Caco-2 (cell line): ENCODE measurements at regions of chr1 and their contacts with region 1.

Region 1: DNA sequence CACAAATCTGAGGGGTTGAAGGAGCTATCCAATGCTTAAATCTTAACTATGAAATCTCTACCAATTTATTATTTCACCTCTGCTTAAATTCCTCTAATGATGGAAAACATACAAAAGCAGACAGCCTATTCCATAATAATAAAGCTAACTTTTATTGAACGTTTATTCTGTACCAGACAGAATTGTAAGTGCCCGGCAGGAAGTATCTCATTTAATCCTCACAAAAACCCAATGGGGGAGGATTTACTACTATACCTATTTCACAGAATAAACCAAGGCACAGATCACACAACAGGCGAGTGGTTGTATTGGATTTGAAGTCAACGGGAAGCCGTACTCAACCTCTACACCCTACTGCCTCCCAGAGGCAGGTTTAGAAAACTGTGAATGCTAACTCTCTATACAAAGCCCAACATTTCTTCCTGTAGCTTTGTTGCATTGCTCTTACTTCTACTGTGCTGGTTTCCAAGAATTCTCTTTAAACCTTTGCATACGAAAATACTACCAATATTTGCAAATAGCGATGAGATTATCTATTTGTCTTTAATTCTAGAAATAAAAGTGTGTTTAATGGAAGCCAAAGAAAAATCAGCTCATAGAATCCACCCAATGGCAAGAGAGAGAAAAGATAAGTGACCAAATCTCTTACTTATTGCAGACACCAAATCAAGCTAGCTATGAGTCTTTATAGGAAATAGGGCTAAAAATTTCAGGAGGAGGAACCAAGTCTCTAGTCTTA is 33.5 kb upstream of the C1orf53 start:
- DNase-seq: peak; percentile 36 to 45
- H3K4me3 ChIP-seq: no peak overlapping the region
- H3K4me3 Mint-ChIP-seq: no peak overlapping the region
- H3K27ac Mint-ChIP-seq: no peak overlapping the region
- H3K4me1 ChIP-seq: no peaks in the 10 kb centered on the region
- H3K4me1 Mint-ChIP-seq: peaks cover 8% of the 10 kb centered on the region
- H3K27me3 ChIP-seq: no peaks in the 10 kb centered on the region
- H3K27me3 Mint-ChIP-seq: peaks cover 6% of the 10 kb centered on the region
- CTCF ChIP-seq: peak; percentile 44 to 55

Region 2: DNA sequence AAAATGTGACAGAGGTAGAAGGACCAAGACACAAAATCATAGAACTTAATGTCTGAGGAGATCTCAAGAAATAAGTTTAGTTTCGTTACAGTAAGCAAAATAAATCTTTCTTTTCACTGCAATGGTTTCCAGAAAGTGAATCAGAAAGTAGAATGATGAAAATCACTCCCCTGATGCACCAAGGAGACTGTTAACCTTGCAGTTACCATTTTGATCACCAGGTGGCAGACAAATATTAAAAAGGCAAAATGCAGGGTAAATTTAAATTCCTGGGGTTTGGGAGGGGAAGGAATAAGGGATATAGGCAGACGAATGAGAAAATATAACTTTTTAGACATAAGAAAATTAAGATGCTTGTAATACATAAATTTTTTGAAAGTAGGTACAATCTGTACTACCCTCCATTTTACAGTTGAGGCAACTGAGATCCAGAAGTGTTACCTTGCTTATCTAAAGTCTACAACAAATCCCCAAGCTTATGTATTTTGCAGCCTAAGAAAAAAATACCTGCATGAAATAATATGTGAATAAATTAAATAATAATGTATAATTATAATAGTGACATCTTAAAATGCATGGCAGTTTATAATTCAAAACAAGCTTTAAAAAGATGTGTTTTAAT is 347.7 kb before region 1 on chr1:
- CTCF ChIA-PET with region 1: no interaction called
- POLR2A ChIA-PET with region 1: no interaction called
- intact Hi-C with region 1: loop called (anchors 2 kb)
- DNase-seq: peak in 1 of 2 experiments; percentile 47
- H3K4me3 ChIP-seq: no peak overlapping the region
- H3K4me3 Mint-ChIP-seq: no peak overlapping the region
- H3K27ac Mint-ChIP-seq: no peak overlapping the region
- H3K4me1 ChIP-seq: no peaks in the 10 kb centered on the region
- H3K4me1 Mint-ChIP-seq: no peaks in the 10 kb centered on the region
- H3K27me3 ChIP-seq: no peaks in the 10 kb centered on the region
- H3K27me3 Mint-ChIP-seq: no peaks in the 10 kb centered on the region
- CTCF ChIP-seq: peak; percentile 64 to 70

Region 3: DNA sequence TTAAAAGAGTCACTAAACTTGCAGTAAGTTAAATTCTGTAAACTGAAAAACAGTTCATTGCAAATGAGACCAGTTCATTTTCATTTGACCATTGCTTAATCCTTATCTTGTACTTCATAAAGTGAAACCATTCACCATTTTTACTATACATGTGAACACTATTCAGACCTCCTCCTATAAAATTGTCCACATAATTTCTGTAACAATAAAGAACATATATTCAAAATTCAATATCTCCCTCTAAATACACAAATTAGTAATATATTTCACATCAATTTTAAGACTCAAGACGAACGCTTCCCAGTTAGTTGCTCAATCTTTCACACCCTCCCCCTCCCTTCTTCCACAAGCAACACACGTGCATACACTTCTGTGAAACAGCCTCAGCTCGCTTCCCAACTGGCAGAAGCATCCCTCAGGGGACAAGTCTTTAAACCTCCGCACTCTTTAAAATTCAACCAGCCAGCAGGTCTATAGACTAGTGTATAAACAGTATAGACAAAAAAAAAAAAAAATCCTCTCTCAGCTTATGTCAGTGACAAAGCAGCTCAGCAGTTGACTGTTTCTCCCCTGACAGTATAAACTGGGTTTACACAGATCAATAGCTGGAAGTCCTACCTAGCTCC is 193.2 kb before region 1 on chr1:
- CTCF ChIA-PET with region 1: no interaction called
- POLR2A ChIA-PET with region 1: no interaction called
- intact Hi-C with region 1: loop called (anchors 5 kb)
- DNase-seq: no peak
- H3K4me3 ChIP-seq: no peak overlapping the region
- H3K4me3 Mint-ChIP-seq: peak overlapping the region; percentile 47
- H3K27ac Mint-ChIP-seq: no peak overlapping the region
- H3K4me1 ChIP-seq: no peaks in the 10 kb centered on the region
- H3K4me1 Mint-ChIP-seq: no peaks in the 10 kb centered on the region
- H3K27me3 ChIP-seq: no peaks in the 10 kb centered on the region
- H3K27me3 Mint-ChIP-seq: no peaks in the 10 kb centered on the region
- CTCF ChIP-seq: no peak

Region 4: DNA sequence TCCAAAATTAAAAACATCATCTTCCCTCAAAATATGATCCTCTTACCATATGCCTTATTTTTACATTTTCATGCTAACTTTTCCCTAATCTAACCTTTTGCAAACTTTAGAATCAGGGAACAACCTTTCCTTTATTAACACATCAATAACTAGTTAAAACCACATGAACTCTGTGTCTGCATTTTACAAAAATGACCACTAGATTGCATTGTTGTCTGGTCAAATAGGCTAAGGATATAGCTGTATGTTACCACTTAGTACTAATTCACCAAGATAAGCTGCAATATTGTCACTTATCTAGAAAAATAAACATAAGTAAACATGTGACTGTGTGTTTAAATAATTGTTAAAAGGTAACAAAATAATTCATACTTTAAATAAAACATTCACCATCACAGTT is 176.0 kb before region 1 on chr1:
- CTCF ChIA-PET with region 1: interaction called, 4 read pairs
- POLR2A ChIA-PET with region 1: no interaction called
- intact Hi-C with region 1: loop called (anchors 1 kb)
- DNase-seq: no peak
- H3K4me3 ChIP-seq: no peak overlapping the region
- H3K4me3 Mint-ChIP-seq: no peak overlapping the region
- H3K27ac Mint-ChIP-seq: no peak overlapping the region
- H3K4me1 ChIP-seq: no peaks in the 10 kb centered on the region
- H3K4me1 Mint-ChIP-seq: no peaks in the 10 kb centered on the region
- H3K27me3 ChIP-seq: no peaks in the 10 kb centered on the region
- H3K27me3 Mint-ChIP-seq: no peaks in the 10 kb centered on the region
- CTCF ChIP-seq: peak in 1 of 2 experiments; percentile 24

Region 5: DNA sequence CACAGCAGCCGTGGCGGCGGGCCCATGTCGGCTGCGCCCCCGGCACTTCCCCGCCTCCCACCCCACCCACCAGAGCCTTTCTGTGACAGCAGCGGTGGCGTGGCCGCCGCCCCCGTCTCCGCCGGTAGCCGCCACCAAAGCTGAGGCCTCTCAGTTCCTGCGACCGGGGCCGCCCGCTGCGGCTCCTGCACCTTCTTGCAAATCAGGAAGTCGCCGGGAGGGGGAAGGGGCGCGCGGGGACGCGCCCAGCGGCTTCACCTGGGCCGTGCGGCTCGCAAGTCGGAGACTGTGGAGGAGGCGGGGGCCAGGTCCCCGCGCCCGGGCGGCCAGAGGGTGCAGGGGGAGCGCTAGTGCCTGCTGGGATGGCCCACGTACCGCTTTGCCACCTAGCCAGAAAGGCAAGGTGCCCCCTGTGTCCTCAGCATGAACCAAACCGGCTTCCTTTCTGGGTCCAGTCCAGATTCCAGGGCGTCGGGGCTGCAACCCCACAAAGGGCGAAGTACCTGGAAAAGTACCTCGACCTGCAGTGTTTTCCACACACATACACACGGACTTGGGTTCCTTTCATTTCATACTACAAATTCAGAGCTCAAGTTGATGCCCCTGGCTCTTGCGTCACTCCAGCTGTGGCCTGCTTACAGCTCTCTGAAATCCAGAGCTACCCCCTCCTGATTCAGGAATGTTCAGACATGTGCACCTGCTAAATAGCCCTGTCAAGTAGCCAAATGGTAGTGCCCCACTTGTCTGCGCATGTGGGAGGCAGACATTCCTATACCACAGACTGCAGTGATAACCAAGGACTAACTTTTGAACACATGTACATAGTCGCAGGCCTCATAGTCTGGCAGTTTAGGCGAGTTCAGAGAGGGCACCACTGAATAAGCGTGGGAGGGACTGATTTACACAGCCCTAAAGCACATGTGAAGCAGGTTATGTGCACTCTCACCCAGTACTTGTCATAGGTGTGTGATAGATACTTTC is 93.3 kb before region 1 on chr1 and contains the start of gene DENND1B:
- CTCF ChIA-PET with region 1: no interaction called
- POLR2A ChIA-PET with region 1: no interaction called
- intact Hi-C with region 1: loop called (anchors 2 kb)
- DNase-seq: peak; percentile 88 to 91
- H3K4me3 ChIP-seq: peak within 1 kb of the TSS; percentile 66
- H3K4me3 Mint-ChIP-seq: peak within 1 kb of the TSS; percentile 83
- H3K27ac Mint-ChIP-seq: peak within 1 kb of the TSS; percentile 80
- H3K4me1 ChIP-seq: 0 out of 2 replicates have a peak, but pooled peaks cover 17% of the 10 kb centered on the region
- H3K4me1 Mint-ChIP-seq: peaks cover 7% of the 10 kb centered on the region
- H3K27me3 ChIP-seq: no peaks in the 10 kb centered on the region
- H3K27me3 Mint-ChIP-seq: no peaks in the 10 kb centered on the region
- CTCF ChIP-seq: peak in 1 of 2 experiments; percentile 28
- total RNA-seq, gene DENND1B: 9.4 and 9.6 TPM in 2 replicates